ENCODE measurements at regions of chr3 and their contacts with region 1.

Region 1: GRCh38 chr3:59575113-59576001 is 525.5 kb upstream of the CFAP20DC start:
- DNase-seq: peak; percentile 75 to 94 (median 81)
- ATAC-seq: peak; percentile 78
- H3K4me3 ChIP-seq: no peak overlapping the region
- H3K4me3 Mint-ChIP-seq: no peak overlapping the region
- H3K27ac ChIP-seq: no peak overlapping the region
- H3K27ac Mint-ChIP-seq: no peak overlapping the region
- H3K4me1 ChIP-seq: peaks cover 5% of the 10 kb centered on the region
- H3K4me1 Mint-ChIP-seq: peaks cover 4% of the 10 kb centered on the region
- H3K27me3 ChIP-seq: no peaks in the 10 kb centered on the region
- H3K27me3 Mint-ChIP-seq: no peaks in the 10 kb centered on the region
- CTCF ChIP-seq: peak; percentile 95

Region 2: DNA sequence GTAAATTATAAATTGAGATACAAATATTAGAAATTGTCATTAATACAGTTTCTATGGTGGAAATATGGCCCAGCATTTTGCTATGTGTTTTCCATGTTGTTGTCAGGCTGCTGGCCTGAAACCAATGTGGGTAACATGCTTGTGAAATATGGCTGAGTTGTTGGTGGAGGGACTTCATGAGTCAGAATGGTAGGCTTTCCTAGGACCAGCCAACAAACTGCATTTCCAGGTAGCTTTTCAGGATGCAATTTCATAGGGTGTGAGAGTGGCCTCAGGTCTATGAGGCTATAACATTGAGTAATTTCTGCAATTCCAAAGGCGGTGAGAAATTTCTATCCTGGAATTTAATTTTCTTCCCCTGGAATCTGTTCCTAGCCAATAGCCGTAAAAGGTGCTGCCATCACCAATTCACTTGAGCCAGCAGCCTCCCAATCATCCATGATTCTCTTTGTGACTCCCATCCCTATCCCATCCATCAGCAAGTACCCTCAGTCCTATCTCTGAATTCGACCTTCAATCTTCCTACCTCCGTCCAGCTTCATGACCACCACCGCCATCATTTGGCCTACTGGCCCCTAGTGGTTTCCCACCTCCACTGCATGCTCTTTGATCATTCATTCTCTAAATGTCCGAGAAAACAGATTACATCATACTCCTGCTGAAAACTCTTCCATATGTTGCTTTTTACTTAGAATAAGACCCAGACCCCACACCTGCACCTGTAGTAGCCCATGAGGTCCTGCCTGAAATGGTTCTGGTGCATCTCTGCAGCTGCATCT is 248.9 kb before region 1 on chr3:
- CTCF ChIA-PET with region 1: no interaction called
- POLR2A ChIA-PET with region 1: no interaction called
- intact Hi-C with region 1: no loop called
- DNase-seq: no peak
- ATAC-seq: no peak
- H3K4me3 ChIP-seq: no peak overlapping the region
- H3K4me3 Mint-ChIP-seq: no peak overlapping the region
- H3K27ac ChIP-seq: no peak overlapping the region
- H3K27ac Mint-ChIP-seq: no peak overlapping the region
- H3K4me1 ChIP-seq: no peaks in the 10 kb centered on the region
- H3K4me1 Mint-ChIP-seq: no peaks in the 10 kb centered on the region
- H3K27me3 ChIP-seq: no peaks in the 10 kb centered on the region
- H3K27me3 Mint-ChIP-seq: no peaks in the 10 kb centered on the region
- CTCF ChIP-seq: no peak

Region 3: GRCh38 chr3:59450946-59451763 is 124.2 kb before region 1 on chr3:
- CTCF ChIA-PET with region 1: interaction called, 3 read pairs
- POLR2A ChIA-PET with region 1: no interaction called
- intact Hi-C with region 1: loop called in 1 of 2 experiments (anchors 1 kb)
- DNase-seq: peak; percentile 26 to 90 (median 58)
- ATAC-seq: peak; percentile 90
- H3K4me3 ChIP-seq: peak overlapping the region in 1 of 2 experiments; percentile 22
- H3K4me3 Mint-ChIP-seq: peak overlapping the region; percentile 72
- H3K27ac ChIP-seq: peak overlapping the region; percentile 73 to 84
- H3K27ac Mint-ChIP-seq: peak overlapping the region; percentile 96
- H3K4me1 ChIP-seq: peaks cover 56% of the 10 kb centered on the region
- H3K4me1 Mint-ChIP-seq: peaks cover 81% of the 10 kb centered on the region
- H3K27me3 ChIP-seq: no peaks in the 10 kb centered on the region
- H3K27me3 Mint-ChIP-seq: no peaks in the 10 kb centered on the region
- CTCF ChIP-seq: no peak

Region 4: DNA sequence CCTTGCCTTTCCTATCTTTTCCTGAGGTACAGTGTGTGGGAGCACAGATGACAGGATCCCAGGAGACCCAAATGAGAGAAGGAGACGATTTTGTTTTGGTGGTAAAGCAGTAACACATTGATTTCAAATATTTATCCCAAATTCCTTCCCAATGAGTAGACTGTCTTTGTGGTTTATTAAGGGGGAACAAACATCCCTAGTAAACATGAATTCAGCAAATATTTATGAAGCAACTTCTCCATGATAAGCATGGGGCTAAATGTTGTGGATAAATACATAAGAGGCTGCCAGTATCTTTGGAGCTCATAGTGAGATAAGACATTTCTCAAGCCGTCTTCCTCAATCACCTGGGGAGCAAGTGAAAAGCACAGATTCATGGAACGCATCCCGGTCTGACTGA is 64.8 kb before region 1 on chr3:
- CTCF ChIA-PET with region 1: no interaction called
- POLR2A ChIA-PET with region 1: no interaction called
- intact Hi-C with region 1: no loop called
- DNase-seq: no peak
- ATAC-seq: no peak
- H3K4me3 ChIP-seq: no peak overlapping the region
- H3K4me3 Mint-ChIP-seq: no peak overlapping the region
- H3K27ac ChIP-seq: no peak overlapping the region
- H3K27ac Mint-ChIP-seq: no peak overlapping the region
- H3K4me1 ChIP-seq: no peaks in the 10 kb centered on the region
- H3K4me1 Mint-ChIP-seq: peaks cover 15% of the 10 kb centered on the region
- H3K27me3 ChIP-seq: no peaks in the 10 kb centered on the region
- H3K27me3 Mint-ChIP-seq: peaks cover 3% of the 10 kb centered on the region
- CTCF ChIP-seq: no peak

Region 5: DNA sequence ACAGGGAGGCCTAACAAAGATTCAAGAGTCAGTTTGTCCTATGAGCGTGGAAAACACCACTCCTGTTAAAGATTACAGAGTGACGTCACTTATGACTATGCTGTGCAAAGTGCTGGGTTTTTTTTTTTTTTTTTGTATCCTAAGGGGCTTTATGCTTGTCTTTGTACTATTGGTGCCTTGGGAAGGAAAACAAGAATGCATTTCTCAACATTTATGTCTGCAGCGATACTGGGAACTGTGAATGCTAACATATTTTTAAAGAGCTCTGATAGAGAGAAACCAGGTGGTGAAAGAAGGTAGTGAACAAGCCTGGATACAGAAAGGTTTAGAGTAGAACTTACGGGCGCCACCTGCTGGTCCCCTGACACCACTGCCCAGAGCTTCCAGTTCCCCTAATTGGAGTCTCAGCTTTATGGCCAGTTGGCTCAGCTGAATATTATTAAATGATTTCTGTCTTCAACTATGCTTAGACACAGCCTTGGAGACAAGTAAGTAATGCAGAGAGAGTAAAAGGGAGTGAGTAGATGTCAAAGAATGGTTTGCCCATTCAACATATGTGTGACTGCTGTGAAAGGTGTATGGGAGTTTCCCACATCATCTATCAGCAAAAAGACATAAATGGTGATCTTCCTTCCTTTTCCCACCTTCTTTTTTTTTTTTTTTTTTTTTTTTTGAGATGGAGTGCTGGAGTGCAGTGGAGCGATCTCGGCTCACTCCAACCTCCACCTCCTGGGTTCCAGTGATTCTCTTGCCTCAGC is 282.4 kb after region 1 on chr3:
- CTCF ChIA-PET with region 1: interaction called, 66 read pairs
- POLR2A ChIA-PET with region 1: no interaction called
- intact Hi-C with region 1: loop called (anchors 1 kb)
- DNase-seq: peak; percentile 50 to 84 (median 77)
- ATAC-seq: peak; percentile 93
- H3K4me3 ChIP-seq: no peak overlapping the region
- H3K4me3 Mint-ChIP-seq: peak overlapping the region; percentile 42
- H3K27ac ChIP-seq: no peak overlapping the region
- H3K27ac Mint-ChIP-seq: no peak overlapping the region
- H3K4me1 ChIP-seq: peaks cover 4% of the 10 kb centered on the region
- H3K4me1 Mint-ChIP-seq: peaks cover 9% of the 10 kb centered on the region
- H3K27me3 ChIP-seq: no peaks in the 10 kb centered on the region
- H3K27me3 Mint-ChIP-seq: no peaks in the 10 kb centered on the region
- CTCF ChIP-seq: peak; percentile 94

Region 6: GRCh38 chr3:60948484-60948883 is 1373.1 kb after region 1 on chr3:
- CTCF ChIA-PET with region 1: interaction called, 4 read pairs
- POLR2A ChIA-PET with region 1: no interaction called
- intact Hi-C with region 1: loop called in 1 of 2 experiments (anchors 10 kb)
- DNase-seq: no peak
- ATAC-seq: no peak
- H3K4me3 ChIP-seq: no peak overlapping the region
- H3K4me3 Mint-ChIP-seq: no peak overlapping the region
- H3K27ac ChIP-seq: no peak overlapping the region
- H3K27ac Mint-ChIP-seq: no peak overlapping the region
- H3K4me1 ChIP-seq: no peaks in the 10 kb centered on the region
- H3K4me1 Mint-ChIP-seq: no peaks in the 10 kb centered on the region
- H3K27me3 ChIP-seq: no peaks in the 10 kb centered on the region
- H3K27me3 Mint-ChIP-seq: no peaks in the 10 kb centered on the region
- CTCF ChIP-seq: no peak

Region 7: DNA sequence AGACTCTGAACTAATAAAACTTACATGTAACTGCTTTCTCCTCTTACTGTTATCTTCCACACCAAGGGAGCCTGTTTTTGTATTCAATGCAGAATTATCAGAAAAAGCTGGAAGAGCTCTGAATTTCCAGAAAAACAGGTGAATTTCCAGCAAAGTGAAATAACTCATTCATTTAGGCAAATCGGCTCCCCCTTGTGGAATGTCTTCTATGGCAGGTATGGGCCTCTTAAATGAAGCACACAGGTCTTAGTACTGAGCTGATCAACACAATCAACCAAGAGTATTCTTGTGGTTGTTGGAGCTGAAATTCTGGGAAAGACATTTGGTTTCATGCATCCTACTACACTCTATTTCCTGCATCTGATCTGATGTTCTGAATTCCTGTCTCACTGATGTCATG is 1955.0 kb after region 1 on chr3:
- CTCF ChIA-PET with region 1: no interaction called
- POLR2A ChIA-PET with region 1: no interaction called
- intact Hi-C with region 1: loop called in 1 of 2 experiments (anchors 5 kb)
- DNase-seq: peak in 2 of 9 experiments; percentile 2 to 9
- ATAC-seq: no peak
- H3K4me3 ChIP-seq: no peak overlapping the region
- H3K4me3 Mint-ChIP-seq: no peak overlapping the region
- H3K27ac ChIP-seq: no peak overlapping the region
- H3K27ac Mint-ChIP-seq: no peak overlapping the region
- H3K4me1 ChIP-seq: no peaks in the 10 kb centered on the region
- H3K4me1 Mint-ChIP-seq: no peaks in the 10 kb centered on the region
- H3K27me3 ChIP-seq: no peaks in the 10 kb centered on the region
- H3K27me3 Mint-ChIP-seq: no peaks in the 10 kb centered on the region
- CTCF ChIP-seq: no peak